AG04450 (cell line): ENCODE measurements at regions of chr12 and their contacts with region 1.

Region 1: DNA sequence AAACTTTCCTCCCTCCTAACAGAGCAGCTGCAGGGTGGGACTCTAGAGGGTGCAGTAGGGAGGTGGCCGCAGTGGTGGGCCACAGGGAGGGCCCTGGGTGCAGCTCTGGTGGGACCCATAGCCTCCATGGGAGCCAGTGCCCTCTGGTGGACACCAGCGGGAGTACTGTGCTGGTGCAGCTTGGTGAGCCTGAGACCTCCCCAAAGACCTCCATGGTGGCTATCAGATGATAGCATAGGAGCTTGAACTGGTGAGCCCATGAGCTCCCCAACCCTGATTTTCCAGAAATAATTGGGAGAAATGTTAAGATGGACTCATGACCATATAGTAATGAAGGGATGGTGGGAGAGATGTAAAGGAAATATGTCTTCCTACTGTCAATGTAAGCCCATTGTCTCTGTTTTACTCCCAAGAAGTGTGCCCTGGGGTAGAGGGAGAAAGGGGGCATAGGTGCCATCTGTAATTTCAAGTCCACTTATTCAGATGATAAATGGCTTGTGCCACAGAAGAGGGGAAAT is 98.7 kb downstream of the GAS2L3 start:
- DNase-seq: no peak
- H3K4me3 ChIP-seq: no peak overlapping the region
- H3K27ac ChIP-seq: no peak overlapping the region
- H3K27me3 ChIP-seq: no peaks in the 10 kb centered on the region
- CTCF ChIP-seq: peak; percentile 53

Region 2: DNA sequence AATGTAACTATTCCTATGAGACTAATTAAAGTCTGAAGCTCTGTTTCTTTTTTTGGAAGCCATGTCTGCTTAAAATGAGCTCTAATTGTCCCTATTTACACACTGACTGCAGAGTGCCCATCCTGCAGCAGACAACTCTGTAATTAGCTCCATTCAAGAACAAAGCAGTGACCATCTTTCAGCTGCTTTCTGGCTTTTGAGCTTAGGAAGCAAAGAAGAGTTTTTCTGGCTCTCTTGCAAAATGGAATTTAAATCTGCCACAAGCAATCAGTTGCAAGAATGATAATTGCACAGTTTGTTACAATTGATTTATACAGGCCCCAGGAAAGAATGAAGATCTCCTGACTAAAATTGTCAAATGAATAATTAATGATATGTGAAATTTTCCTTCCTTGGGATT is 15.3 kb before region 1 on chr12:
- CTCF ChIA-PET with region 1: interaction called, 12 read pairs
- POLR2A ChIA-PET with region 1: no interaction called
- DNase-seq: no peak
- H3K4me3 ChIP-seq: no peak overlapping the region
- H3K27ac ChIP-seq: no peak overlapping the region
- H3K27me3 ChIP-seq: no peaks in the 10 kb centered on the region
- CTCF ChIP-seq: no peak

Region 3: GRCh38 chr12:100682178-100682577 is 10.0 kb after region 1 on chr12:
- CTCF ChIA-PET with region 1: interaction called, 11 read pairs
- POLR2A ChIA-PET with region 1: no interaction called
- DNase-seq: no peak
- H3K4me3 ChIP-seq: no peak overlapping the region
- H3K27ac ChIP-seq: no peak overlapping the region
- H3K27me3 ChIP-seq: no peaks in the 10 kb centered on the region
- CTCF ChIP-seq: no peak

Region 4: GRCh38 chr12:100692502-100692901 is 20.4 kb after region 1 on chr12:
- CTCF ChIA-PET with region 1: no interaction called
- POLR2A ChIA-PET with region 1: no interaction called
- DNase-seq: no peak
- H3K4me3 ChIP-seq: no peak overlapping the region
- H3K27ac ChIP-seq: no peak overlapping the region
- H3K27me3 ChIP-seq: no peaks in the 10 kb centered on the region
- CTCF ChIP-seq: no peak

Region 5: DNA sequence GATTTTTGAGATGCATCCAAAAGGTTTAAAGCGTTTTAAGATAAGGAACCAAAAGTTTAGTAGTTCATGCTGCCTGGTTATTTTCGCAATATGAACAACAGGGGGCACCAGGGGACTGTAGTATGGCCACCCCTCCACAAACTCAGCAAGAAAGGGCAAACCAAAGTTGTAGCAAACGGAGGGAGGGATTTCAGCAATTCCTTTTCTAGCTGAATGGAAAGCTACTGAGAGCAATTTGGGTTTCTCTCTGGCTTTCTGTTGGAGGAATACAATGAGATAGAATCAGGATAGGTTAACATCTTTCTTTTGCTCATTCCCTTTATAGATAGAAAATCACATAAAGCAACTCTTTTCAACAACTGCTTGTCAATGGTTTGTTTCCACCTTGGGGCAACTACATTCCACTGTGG is 1267.7 kb after region 1 on chr12:
- CTCF ChIA-PET with region 1: no interaction called
- POLR2A ChIA-PET with region 1: no interaction called
- DNase-seq: peak; percentile 63
- H3K4me3 ChIP-seq: no peak overlapping the region
- H3K27ac ChIP-seq: no peak overlapping the region
- H3K27me3 ChIP-seq: no peaks in the 10 kb centered on the region
- CTCF ChIP-seq: peak; percentile 89